ENCODE measurements at regions of chrX and their contacts with region 1.

Region 1: DNA sequence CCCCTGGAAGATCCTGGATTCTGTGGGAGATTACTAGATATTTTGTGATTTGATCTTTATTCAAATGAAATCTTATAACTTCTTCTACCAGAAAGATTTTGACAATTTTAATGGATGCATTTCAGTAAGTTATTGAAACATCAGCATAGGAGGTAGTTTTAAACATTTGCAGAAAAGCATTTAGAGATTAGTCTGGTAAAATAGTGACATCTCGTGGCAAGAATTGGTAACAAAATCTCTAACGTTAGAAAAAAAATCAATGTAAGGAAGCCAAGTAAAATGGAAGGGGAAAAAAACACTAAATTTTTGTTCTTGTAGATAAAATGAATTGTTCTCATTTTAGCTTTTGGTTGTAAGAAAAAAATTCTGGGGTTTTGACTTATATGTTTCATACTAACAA is 73.3 kb downstream of the TASL start:
- DNase-seq: no peak
- ATAC-seq: no peak
- H3K4me3 Mint-ChIP-seq: no peak overlapping the region
- H3K27ac Mint-ChIP-seq: no peak overlapping the region
- H3K4me1 Mint-ChIP-seq: no peaks in the 10 kb centered on the region
- H3K27me3 Mint-ChIP-seq: peaks cover 4% of the 10 kb centered on the region

Region 2: GRCh38 chrX:30141966-30142365 is 362.3 kb before region 1 on chrX:
- CTCF ChIA-PET with region 1: interaction called, 3 read pairs
- POLR2A ChIA-PET with region 1: no interaction called
- intact Hi-C with region 1: loop called (anchors 1 to 5 kb)
- DNase-seq: peak; percentile 12
- ATAC-seq: no peak
- H3K4me3 Mint-ChIP-seq: no peak overlapping the region
- H3K27ac Mint-ChIP-seq: no peak overlapping the region
- H3K4me1 Mint-ChIP-seq: no peaks in the 10 kb centered on the region
- H3K27me3 Mint-ChIP-seq: no peaks in the 10 kb centered on the region

Region 3: DNA sequence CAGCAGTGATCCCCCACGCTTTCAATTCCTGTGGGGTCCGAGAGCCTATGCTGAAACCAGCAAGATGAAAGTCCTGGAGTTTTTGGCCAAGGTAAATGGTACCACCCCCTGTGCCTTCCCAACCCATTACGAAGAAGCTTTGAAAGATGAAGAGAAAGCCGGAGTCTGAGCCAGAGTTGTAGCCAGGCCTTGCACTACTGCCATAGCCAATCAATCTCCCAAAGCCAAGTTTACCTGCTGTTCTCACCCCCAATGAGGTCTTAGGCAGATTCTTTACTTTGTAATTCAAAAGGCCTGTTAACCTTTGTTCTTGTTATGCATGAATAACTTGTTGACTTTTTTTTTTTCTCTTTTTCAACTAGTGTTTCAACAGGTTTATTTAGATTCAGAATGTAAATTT is 284.9 kb before region 1 on chrX:
- CTCF ChIA-PET with region 1: no interaction called
- POLR2A ChIA-PET with region 1: no interaction called
- intact Hi-C with region 1: no loop called
- DNase-seq: no peak
- ATAC-seq: no peak
- H3K4me3 Mint-ChIP-seq: no peak overlapping the region
- H3K27ac Mint-ChIP-seq: no peak overlapping the region
- H3K4me1 Mint-ChIP-seq: no peaks in the 10 kb centered on the region
- H3K27me3 Mint-ChIP-seq: no peaks in the 10 kb centered on the region

Region 4: GRCh38 chrX:30261012-30261411 is 243.3 kb before region 1 on chrX:
- CTCF ChIA-PET with region 1: no interaction called
- POLR2A ChIA-PET with region 1: no interaction called
- intact Hi-C with region 1: no loop called
- DNase-seq: no peak
- ATAC-seq: no peak
- H3K4me3 Mint-ChIP-seq: no peak overlapping the region
- H3K27ac Mint-ChIP-seq: no peak overlapping the region
- H3K4me1 Mint-ChIP-seq: no peaks in the 10 kb centered on the region
- H3K27me3 Mint-ChIP-seq: no peaks in the 10 kb centered on the region

Region 5: DNA sequence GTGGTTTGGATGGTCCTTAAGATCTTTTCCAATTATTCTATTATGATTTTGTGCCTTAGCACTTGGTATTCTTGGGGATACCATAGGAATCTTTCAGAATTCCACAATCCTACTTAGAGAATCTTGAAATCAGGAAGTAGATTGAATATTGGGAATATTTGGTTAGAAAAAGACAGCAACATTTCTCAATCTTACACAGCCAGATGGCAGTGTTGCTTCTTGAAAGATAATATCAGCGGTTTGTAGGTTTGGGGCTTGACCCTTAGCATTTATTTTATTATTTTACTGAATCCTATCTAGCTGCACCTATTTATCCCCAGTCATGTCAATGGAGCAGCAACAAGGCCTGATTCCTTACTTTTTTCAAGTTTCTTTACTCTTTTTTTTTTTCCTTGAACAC is 228.8 kb before region 1 on chrX:
- CTCF ChIA-PET with region 1: no interaction called
- POLR2A ChIA-PET with region 1: no interaction called
- intact Hi-C with region 1: loop called in 1 of 2 experiments (anchors 2 kb)
- DNase-seq: no peak
- ATAC-seq: no peak
- H3K4me3 Mint-ChIP-seq: no peak overlapping the region
- H3K27ac Mint-ChIP-seq: no peak overlapping the region
- H3K4me1 Mint-ChIP-seq: peaks cover 6% of the 10 kb centered on the region
- H3K27me3 Mint-ChIP-seq: peaks cover 2% of the 10 kb centered on the region

Region 6: GRCh38 chrX:30488092-30488491 is 16.2 kb before region 1 on chrX:
- CTCF ChIA-PET with region 1: no interaction called
- POLR2A ChIA-PET with region 1: no interaction called
- intact Hi-C with region 1: no loop called
- DNase-seq: no peak
- ATAC-seq: no peak
- H3K4me3 Mint-ChIP-seq: no peak overlapping the region
- H3K27ac Mint-ChIP-seq: no peak overlapping the region
- H3K4me1 Mint-ChIP-seq: no peaks in the 10 kb centered on the region
- H3K27me3 Mint-ChIP-seq: no peaks in the 10 kb centered on the region

Region 7: GRCh38 chrX:30779453-30780030 is 275.2 kb after region 1 on chrX:
- CTCF ChIA-PET with region 1: no interaction called
- POLR2A ChIA-PET with region 1: no interaction called
- intact Hi-C with region 1: no loop called
- DNase-seq: no peak
- ATAC-seq: no peak
- H3K4me3 Mint-ChIP-seq: no peak overlapping the region
- H3K27ac Mint-ChIP-seq: no peak overlapping the region
- H3K4me1 Mint-ChIP-seq: peaks cover 23% of the 10 kb centered on the region
- H3K27me3 Mint-ChIP-seq: peaks cover 13% of the 10 kb centered on the region

Measured in activated CD4-positive, alpha-beta T cell treated with anti-CD3 and anti-CD28 coated beads for 36 hours (primary cell).